ENCODE measurements at regions of chr10 and their contacts with region 1.

Region 1: DNA sequence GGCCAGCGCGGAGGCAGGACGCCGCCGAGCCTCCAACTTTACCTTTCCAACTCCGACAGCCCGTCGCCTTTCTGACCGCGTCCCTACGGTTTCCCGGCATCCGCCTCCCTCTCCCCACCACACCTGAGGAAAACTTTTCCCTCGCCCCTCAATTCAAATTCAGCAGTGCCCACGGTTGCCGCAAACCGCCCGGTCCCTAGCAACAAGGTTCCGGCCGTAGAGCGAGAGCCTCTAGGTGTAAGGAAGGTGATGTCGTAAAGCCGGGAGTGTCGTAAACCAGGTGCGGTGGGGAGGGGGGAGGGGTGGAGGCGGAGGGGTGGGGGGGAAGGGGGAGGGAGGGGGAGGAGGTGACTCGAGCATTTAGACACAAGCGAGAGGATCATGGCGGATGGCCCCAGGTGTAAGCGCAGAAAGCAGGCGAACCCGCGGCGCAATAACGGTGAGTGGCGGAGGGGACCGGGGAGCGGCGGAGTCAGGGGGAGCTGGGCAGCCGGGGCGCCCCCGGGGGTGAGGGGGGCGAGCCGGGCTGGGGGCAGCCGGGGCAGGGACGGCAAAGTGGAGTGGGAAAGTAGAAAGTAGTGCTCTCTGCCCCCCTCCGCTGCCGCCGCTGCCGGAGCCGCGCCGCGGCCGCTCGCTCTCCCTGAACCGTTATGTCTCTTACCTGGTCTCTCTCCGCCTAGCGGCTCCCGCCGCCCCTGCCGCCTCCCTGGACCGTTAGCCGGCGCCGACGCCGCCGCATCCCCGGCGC is at the start of gene ZEB1:
- DNase-seq: peak; percentile 95
- ATAC-seq: peak; percentile 55
- H3K4me3 Mint-ChIP-seq: peak within 1 kb of the TSS; percentile 93
- H3K27ac Mint-ChIP-seq: peak within 1 kb of the TSS; percentile 99
- H3K4me1 Mint-ChIP-seq: peaks cover 39% of the 10 kb centered on the region
- H3K27me3 Mint-ChIP-seq: no peaks in the 10 kb centered on the region
- total RNA-seq, gene ZEB1: 32.0 to 49.0 TPM

Region 2: DNA sequence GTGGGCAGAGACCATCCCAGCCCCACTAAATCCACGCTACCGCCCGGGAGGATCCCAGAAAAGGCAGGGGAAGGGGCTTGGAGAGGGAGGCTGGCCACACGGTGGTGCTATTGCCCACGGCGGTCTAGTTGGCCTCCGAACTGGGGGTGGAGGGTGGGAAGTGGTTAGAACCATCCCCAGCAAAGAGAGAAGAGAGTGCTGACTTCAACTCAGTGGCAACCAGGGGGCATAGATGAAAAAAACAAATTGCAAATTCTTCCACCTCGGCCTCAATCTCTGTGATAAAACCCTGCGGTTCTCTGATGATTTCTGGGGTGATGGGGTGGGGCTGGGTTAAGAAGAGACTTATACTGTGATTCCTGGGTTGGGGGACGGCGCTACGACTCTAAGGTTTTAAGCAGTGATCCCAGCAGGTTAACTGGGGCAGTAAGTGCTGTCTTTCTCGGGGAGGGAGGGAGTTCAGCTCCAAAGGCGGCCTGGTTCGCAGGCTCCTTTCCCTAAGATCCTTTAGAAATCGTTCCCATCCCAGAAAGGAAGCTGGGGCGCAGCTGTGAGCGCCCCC is 535.0 kb before region 1 on chr10:
- CTCF ChIA-PET with region 1: no interaction called
- POLR2A ChIA-PET with region 1: no interaction called
- intact Hi-C with region 1: loop called (anchors 1 to 5 kb)
- DNase-seq: peak; percentile 90
- ATAC-seq: peak; percentile 86
- H3K4me3 Mint-ChIP-seq: peak overlapping the region; percentile 66
- H3K27ac Mint-ChIP-seq: peak overlapping the region; percentile 21
- H3K4me1 Mint-ChIP-seq: peaks cover 20% of the 10 kb centered on the region
- H3K27me3 Mint-ChIP-seq: peaks cover 2% of the 10 kb centered on the region

Region 3: DNA sequence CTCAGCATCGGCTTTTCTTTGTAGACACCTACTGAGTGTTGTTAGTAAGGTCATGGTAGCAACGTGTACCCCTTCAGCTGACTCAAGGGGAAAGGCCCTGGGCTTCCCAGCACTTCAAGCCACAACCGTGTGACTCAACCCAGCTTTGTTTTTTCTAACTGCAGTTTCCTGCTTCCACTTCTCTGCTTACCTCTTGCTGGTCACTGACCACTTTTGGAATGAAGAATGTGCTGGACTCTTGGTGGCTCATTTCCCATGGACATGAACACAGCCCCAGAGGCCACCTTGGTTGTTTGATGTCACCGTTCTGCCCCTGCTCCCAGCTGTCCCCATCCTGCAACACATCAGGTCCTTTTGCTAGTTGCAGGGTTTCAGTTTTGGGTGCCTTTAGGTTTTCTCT is 217.9 kb before region 1 on chr10:
- CTCF ChIA-PET with region 1: no interaction called
- POLR2A ChIA-PET with region 1: interaction called, 3 read pairs
- intact Hi-C with region 1: loop called in 1 of 2 experiments (anchors 2 kb)
- DNase-seq: peak; percentile 86
- ATAC-seq: peak; percentile 96
- H3K4me3 Mint-ChIP-seq: no peak overlapping the region
- H3K27ac Mint-ChIP-seq: peak overlapping the region; percentile 91
- H3K4me1 Mint-ChIP-seq: peaks cover 44% of the 10 kb centered on the region
- H3K27me3 Mint-ChIP-seq: no peaks in the 10 kb centered on the region

Region 4: GRCh38 chr10:31353574-31353973 is 34.5 kb after region 1 on chr10:
- CTCF ChIA-PET with region 1: interaction called, 3 read pairs
- POLR2A ChIA-PET with region 1: no interaction called
- intact Hi-C with region 1: loop called in 1 of 2 experiments (anchors 1 kb)
- DNase-seq: peak; percentile 27
- ATAC-seq: peak; percentile 99
- H3K4me3 Mint-ChIP-seq: no peak overlapping the region
- H3K27ac Mint-ChIP-seq: no peak overlapping the region
- H3K4me1 Mint-ChIP-seq: peaks cover 59% of the 10 kb centered on the region
- H3K27me3 Mint-ChIP-seq: no peaks in the 10 kb centered on the region

Region 5: DNA sequence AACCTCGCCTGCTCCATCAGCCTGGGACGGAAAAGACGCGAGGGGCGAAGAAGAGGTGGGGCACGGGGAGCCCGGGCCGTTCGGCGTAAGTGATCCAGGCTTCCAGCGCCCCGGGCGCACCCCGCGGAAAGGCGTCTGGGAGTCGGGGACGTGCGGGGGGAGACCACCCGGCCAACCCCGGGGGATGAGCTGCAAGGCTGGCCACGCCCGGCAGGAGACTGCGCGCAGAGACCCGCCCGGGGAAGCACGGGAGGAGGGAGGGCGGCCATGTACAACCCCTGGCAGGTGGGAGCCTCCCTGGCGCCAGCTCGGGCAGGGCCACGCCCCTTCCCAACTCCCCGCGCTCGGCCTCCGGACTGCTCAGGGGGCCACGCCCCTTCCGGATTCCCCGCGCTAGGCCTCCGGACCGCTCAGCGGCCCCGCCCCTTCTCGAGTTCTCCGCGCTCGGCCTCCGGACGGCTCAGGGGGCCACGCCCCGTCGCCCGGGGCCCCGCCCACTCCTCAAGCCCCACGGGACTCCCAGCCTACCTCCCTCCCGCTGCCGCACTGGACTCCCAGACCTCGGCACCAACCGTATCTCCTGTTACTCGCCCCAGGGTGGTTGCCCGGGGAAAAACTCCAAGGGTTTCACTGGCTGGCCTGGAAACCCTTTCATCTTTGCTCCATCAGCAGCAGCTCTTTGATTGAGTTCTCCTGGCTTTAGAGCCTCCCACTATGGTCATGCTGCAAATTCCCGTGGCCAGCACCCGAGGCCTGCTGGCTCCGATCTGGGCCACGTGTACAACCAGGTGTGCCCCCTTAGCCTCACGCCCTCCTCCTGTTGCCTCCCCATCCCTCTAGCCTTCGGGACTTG is 284.4 kb after region 1 on chr10:
- CTCF ChIA-PET with region 1: no interaction called
- POLR2A ChIA-PET with region 1: no interaction called
- intact Hi-C with region 1: loop called in 1 of 2 experiments (anchors 5 kb)
- DNase-seq: peak; percentile 94
- ATAC-seq: peak; percentile 92
- H3K4me3 Mint-ChIP-seq: peak overlapping the region; percentile 76
- H3K27ac Mint-ChIP-seq: peak overlapping the region; percentile 17
- H3K4me1 Mint-ChIP-seq: peaks cover 33% of the 10 kb centered on the region
- H3K27me3 Mint-ChIP-seq: peaks cover 2% of the 10 kb centered on the region

Region 6: DNA sequence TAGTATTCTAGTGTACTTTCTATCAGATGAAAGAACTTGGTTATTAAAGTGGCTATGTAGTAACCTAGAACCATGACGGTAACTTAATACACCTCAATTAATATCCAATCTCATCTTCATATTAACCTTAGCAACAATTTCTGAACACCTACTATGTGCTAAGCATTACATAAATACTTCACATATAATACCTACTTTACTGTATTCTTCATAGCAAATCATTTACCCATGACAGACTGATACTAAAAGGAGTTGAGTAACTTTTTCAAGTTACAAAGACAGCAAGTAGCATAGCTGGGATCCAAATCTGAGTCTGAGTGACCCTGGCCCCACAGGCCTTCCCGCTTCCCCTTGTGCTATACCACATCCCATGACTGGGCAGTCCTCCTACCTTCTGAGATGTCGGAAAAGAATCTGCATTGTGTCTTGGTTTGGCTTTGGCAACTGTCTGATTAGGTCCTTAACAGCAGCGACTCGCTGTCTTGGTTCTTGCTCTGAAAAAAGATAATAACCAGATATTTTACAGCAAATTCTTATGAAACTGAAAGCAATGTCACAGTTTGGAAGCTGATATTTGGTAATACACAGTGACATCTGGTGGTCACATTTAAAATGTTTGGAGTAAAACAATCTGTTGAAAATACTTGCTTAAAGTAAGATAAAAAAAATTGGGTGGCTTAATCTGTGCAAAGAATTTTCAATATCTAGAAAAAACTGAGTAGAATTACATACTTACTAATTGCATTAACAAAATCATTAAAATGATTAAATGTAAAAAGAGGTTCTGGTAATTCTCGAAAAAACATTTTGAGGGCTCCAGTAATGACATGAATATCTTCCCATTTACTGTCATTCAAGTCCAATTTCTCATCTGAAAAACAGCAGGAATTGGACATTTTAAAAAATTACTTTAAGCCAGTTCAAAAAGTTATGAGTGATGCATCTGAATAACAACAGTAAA is 489.5 kb after region 1 on chr10:
- CTCF ChIA-PET with region 1: interaction called, 4 read pairs
- POLR2A ChIA-PET with region 1: no interaction called
- intact Hi-C with region 1: loop called (anchors 2 to 5 kb)
- DNase-seq: peak; percentile 28
- ATAC-seq: peak; percentile 51
- H3K4me3 Mint-ChIP-seq: peak overlapping the region; percentile 22
- H3K27ac Mint-ChIP-seq: peak overlapping the region; percentile 91
- H3K4me1 Mint-ChIP-seq: peaks cover 7% of the 10 kb centered on the region
- H3K27me3 Mint-ChIP-seq: no peaks in the 10 kb centered on the region

Measured in activated CD4-positive, alpha-beta T cell treated with anti-CD3 and anti-CD28 coated beads for 36 hours (primary cell).